ENCODE measurements at regions of chr19 and their contacts with region 1.

Region 1: DNA sequence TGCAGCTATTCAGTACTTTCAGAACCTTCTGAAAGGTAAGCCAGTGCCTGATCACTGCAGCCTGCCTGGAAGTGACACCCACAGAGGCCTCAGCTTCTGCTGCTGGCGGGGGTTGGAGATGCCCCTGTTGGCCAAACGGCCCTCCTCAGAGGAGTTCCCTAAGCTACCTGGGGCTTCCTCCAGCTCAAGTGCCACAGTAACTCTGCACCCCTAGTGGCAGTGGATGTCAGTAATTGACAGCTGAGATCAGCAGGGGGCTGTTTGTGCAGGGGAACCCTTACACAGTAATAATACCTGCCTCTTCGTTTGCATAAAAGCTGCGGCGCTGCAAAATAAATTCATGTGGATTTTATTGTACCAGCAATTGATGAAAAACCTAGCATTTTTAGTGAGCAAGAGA is 28.9 kb downstream of the TDRD12 start:
- DNase-seq: peak in 6 of 9 donors; percentile 19 to 41 (median 30)
- ATAC-seq: no peak
- H3K4me3 ChIP-seq: no peak overlapping the region
- H3K4me3 Mint-ChIP-seq: peak overlapping the region in 1 of 10 donors; percentile 23
- H3K27ac ChIP-seq: no peak overlapping the region
- H3K27ac Mint-ChIP-seq: no peak overlapping the region
- H3K4me1 ChIP-seq: peaks cover 5 to 35% of the 10 kb centered on the region in 2 donors
- H3K4me1 Mint-ChIP-seq: peaks cover 0 to 19% (median 7%) of the 10 kb centered on the region in 7 donors
- H3K27me3 ChIP-seq: peaks cover 0 to 3% of the 10 kb centered on the region in 2 donors
- H3K27me3 Mint-ChIP-seq: peaks cover 7 to 22% (median 16%) of the 10 kb centered on the region in 5 donors

Region 2: GRCh38 chr19:32809254-32809653 is 60.8 kb after region 1 on chr19:
- CTCF ChIA-PET with region 1: no interaction called
- POLR2A ChIA-PET with region 1: no interaction called
- intact Hi-C with region 1: loop called in 1 of 2 experiments (anchors 5 kb)
- DNase-seq: no peak
- ATAC-seq: no peak
- H3K4me3 ChIP-seq: no peak overlapping the region
- H3K4me3 Mint-ChIP-seq: peak overlapping the region in 9 of 10 donors; percentile 35 to 75 (median 64)
- H3K27ac ChIP-seq: no peak overlapping the region
- H3K27ac Mint-ChIP-seq: peak overlapping the region in 7 of 9 donors; percentile 12 to 91 (median 66)
- H3K4me1 ChIP-seq: peaks cover 0 to 7% of the 10 kb centered on the region in 2 donors
- H3K4me1 Mint-ChIP-seq: peaks cover 6 to 38% (median 31%) of the 10 kb centered on the region in 7 donors
- H3K27me3 ChIP-seq: no peaks in the 10 kb centered on the region
- H3K27me3 Mint-ChIP-seq: peaks cover 0 to 7% (median 0%) of the 10 kb centered on the region in 5 donors

Region 3: GRCh38 chr19:32824191-32824751 is 75.8 kb after region 1 on chr19:
- CTCF ChIA-PET with region 1: no interaction called
- POLR2A ChIA-PET with region 1: no interaction called
- intact Hi-C with region 1: no loop called
- DNase-seq: no peak
- ATAC-seq: no peak
- H3K4me3 ChIP-seq: no peak overlapping the region
- H3K4me3 Mint-ChIP-seq: no peak overlapping the region
- H3K27ac ChIP-seq: no peak overlapping the region
- H3K27ac Mint-ChIP-seq: peak overlapping the region in 1 of 9 donors; percentile 77
- H3K4me1 ChIP-seq: no peaks in the 10 kb centered on the region
- H3K4me1 Mint-ChIP-seq: peaks cover 5 to 34% (median 18%) of the 10 kb centered on the region in 7 donors
- H3K27me3 ChIP-seq: peaks cover 0 to 3% of the 10 kb centered on the region in 2 donors
- H3K27me3 Mint-ChIP-seq: peaks cover 0 to 15% (median 12%) of the 10 kb centered on the region in 5 donors

Region 4: DNA sequence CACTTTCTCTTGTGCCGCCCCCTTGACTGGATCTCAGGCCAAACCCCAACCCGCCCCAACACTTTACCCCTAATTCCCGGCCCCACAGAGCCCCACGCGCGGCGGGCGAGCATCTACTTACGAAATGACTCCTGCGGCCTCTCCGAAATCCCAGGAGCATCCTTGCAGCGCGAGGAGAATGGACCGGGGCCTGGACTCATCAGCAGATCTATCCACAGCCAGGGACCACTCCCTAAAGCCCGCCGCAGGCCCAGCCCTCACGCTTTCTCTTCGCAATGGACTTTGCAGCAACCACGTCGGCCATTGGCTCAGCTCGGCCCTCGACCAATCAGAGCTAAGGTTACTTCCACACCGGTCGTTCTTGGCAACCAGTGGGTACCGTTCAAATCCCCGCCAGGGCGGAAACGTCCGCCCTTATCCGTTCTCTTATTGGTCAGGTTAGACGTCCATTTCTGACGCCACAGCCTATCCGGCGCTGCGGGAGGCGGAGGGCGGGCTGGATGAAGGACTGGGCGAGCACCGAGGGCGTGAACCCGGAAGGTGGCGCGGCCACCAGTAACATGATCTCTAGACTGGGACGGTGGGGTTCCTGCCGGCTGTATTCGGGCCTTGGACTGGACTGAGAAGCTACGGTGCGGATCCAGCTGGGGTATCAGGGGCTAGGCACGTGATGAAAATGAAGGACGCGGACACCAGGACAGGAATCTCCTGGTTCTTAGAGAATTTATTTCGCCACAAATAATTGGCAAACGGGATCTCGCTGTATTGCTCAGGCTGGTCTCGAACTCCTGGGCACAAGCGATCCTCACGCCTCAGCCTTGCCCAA is 223.4 kb after region 1 on chr19 and contains the starts of genes CEP89 and FAAP24:
- CTCF ChIA-PET with region 1: no interaction called
- POLR2A ChIA-PET with region 1: no interaction called
- intact Hi-C with region 1: no loop called
- DNase-seq: peak; percentile 89 to 99 (median 98)
- ATAC-seq: peak; percentile 98
- H3K4me3 ChIP-seq: peak within 1 kb of the TSS; percentile 78
- H3K4me3 Mint-ChIP-seq: peak within 1 kb of the TSS; percentile 96 to 100 (median 99)
- H3K27ac ChIP-seq: peak within 1 kb of the TSS; percentile 75
- H3K27ac Mint-ChIP-seq: peak within 1 kb of the TSS; percentile 92 to 97 (median 97)
- H3K4me1 ChIP-seq: peaks cover 0 to 5% of the 10 kb centered on the region in 2 donors
- H3K4me1 Mint-ChIP-seq: peaks cover 14 to 27% (median 20%) of the 10 kb centered on the region in 7 donors
- H3K27me3 ChIP-seq: no peaks in the 10 kb centered on the region
- H3K27me3 Mint-ChIP-seq: no peaks in the 10 kb centered on the region
- total RNA-seq, gene CEP89: 7.4 to 22.4 (median 20.1) TPM
- total RNA-seq, gene FAAP24: 0.71 to 7.2 (median 2.5) TPM

Region 5: GRCh38 chr19:33080761-33081681 is 332.5 kb after region 1 on chr19 and contains the start of gene GPATCH1:
- CTCF ChIA-PET with region 1: no interaction called
- POLR2A ChIA-PET with region 1: no interaction called
- intact Hi-C with region 1: loop called in 1 of 2 experiments (anchors 5 kb)
- DNase-seq: peak; percentile 79 to 92 (median 85)
- ATAC-seq: peak; percentile 99
- H3K4me3 ChIP-seq: peak within 1 kb of the TSS; percentile 98
- H3K4me3 Mint-ChIP-seq: peak within 1 kb of the TSS; percentile 92 to 99 (median 94)
- H3K27ac ChIP-seq: peak within 1 kb of the TSS; percentile 84
- H3K27ac Mint-ChIP-seq: peak within 1 kb of the TSS; percentile 89 to 99 (median 94)
- H3K4me1 ChIP-seq: peaks cover 10 to 11% of the 10 kb centered on the region in 2 donors
- H3K4me1 Mint-ChIP-seq: peaks cover 20 to 39% (median 30%) of the 10 kb centered on the region in 7 donors
- H3K27me3 ChIP-seq: no peaks in the 10 kb centered on the region
- H3K27me3 Mint-ChIP-seq: no peaks in the 10 kb centered on the region
- total RNA-seq, gene GPATCH1: 11.2 to 20.0 (median 14.4) TPM

Measured in naive thymus-derived CD4-positive, alpha-beta T cell (primary cell).